ENCODE measurements at regions of chr7 and their contacts with region 1.

Region 1: DNA sequence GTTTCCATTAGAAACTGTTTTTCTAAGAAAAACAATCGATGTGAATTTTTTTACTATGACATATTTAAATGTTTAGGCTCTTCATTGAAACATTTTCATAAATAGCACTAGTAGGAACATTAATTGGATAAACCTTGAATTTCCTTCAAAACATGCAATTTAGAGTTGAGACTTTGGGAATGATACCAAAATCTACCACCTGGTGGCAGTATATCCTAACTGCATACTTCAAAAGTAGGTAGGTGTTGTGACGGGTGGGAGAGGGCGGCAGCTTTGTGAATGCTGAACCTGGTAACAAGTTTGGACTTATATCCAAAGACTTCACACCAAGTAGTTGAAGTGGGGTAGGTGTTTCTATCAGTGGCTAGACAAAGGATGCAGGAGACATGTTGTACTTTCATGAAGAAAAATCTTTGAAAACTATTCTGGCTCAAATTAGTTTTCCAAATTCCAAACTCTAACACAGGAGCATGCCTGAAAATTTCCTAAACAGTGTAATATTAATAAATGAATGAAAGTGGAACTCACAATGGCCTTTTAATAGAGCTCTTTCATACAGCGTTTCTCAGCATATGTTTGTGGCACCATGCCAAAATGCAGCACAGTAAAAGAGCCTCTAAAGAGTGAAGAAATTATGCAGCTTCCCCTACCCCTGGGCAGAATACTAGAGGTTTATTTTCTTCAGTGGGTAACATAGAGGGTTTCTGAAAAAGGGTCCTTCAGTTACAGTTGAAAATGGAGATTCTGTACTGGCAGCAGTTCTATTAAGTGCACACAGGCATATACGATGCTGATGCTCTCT is 201.0 kb upstream of the TPK1 start:
- DNase-seq: peak; percentile 12
- ATAC-seq: peak; percentile 86
- H3K4me3 ChIP-seq: no peak overlapping the region
- H3K27ac ChIP-seq: no peak overlapping the region
- H3K4me1 ChIP-seq: no peaks in the 10 kb centered on the region
- H3K27me3 ChIP-seq: no peaks in the 10 kb centered on the region
- CTCF ChIP-seq: peak; percentile 75 to 80 (median 77)
- EP300 ChIP-seq: no peak
- POLR2A ChIP-seq: no peak
- RAD21 ChIP-seq: peak; percentile 81

Region 2: DNA sequence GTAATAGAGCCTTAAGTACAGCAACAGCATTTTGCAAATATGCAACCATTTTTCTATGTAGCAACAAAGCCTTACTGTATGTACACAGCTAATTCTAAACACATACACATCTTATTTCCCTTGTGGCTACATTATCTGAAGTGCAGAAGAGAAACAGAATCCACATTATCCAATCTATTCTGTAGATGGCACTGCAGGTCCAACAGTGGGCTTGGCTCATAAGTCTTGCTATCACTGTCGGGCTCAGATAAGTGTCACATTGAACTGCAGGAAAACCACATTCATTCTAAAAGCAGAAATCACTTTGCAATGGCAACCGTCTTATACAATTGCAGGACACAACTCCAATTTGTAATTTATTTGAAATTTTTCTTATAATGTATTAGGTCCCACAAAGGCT is 523.5 kb before region 1 on chr7:
- CTCF ChIA-PET with region 1: no interaction called
- POLR2A ChIA-PET with region 1: no interaction called
- RAD21 ChIA-PET with region 1: no interaction called
- SMC1A ChIA-PET with region 1: no interaction called
- in situ Hi-C with region 1: no loop called
- intact Hi-C with region 1: loop called (anchors 10 kb)
- DNase-seq: peak; percentile 11
- ATAC-seq: peak; percentile 56
- H3K4me3 ChIP-seq: no peak overlapping the region
- H3K27ac ChIP-seq: no peak overlapping the region
- H3K4me1 ChIP-seq: peaks cover 4% of the 10 kb centered on the region
- H3K27me3 ChIP-seq: no peaks in the 10 kb centered on the region
- CTCF ChIP-seq: peak; percentile 15 to 54 (median 27); a peak in 4 of 6 replicates
- EP300 ChIP-seq: no peak
- POLR2A ChIP-seq: no peak
- RAD21 ChIP-seq: peak; percentile 67

Region 3: GRCh38 chr7:144738708-144739314 is 298.0 kb before region 1 on chr7:
- CTCF ChIA-PET with region 1: no interaction called
- POLR2A ChIA-PET with region 1: no interaction called
- RAD21 ChIA-PET with region 1: no interaction called
- SMC1A ChIA-PET with region 1: no interaction called
- in situ Hi-C with region 1: no loop called
- intact Hi-C with region 1: loop called (anchors 10 kb)
- DNase-seq: no peak
- ATAC-seq: peak; percentile 91
- H3K4me3 ChIP-seq: no peak overlapping the region
- H3K27ac ChIP-seq: no peak overlapping the region
- H3K4me1 ChIP-seq: no peaks in the 10 kb centered on the region
- H3K27me3 ChIP-seq: no peaks in the 10 kb centered on the region
- CTCF ChIP-seq: peak; percentile 66 to 71 (median 70)
- EP300 ChIP-seq: no peak
- POLR2A ChIP-seq: no peak
- RAD21 ChIP-seq: peak; percentile 66

Region 4: GRCh38 chr7:144780071-144780608 is 256.7 kb before region 1 on chr7:
- CTCF ChIA-PET with region 1: no interaction called
- POLR2A ChIA-PET with region 1: no interaction called
- RAD21 ChIA-PET with region 1: no interaction called
- SMC1A ChIA-PET with region 1: no interaction called
- in situ Hi-C with region 1: no loop called
- intact Hi-C with region 1: no loop called
- DNase-seq: no peak
- ATAC-seq: no peak
- H3K4me3 ChIP-seq: no peak overlapping the region
- H3K27ac ChIP-seq: no peak overlapping the region
- H3K4me1 ChIP-seq: no peaks in the 10 kb centered on the region
- H3K27me3 ChIP-seq: no peaks in the 10 kb centered on the region
- CTCF ChIP-seq: no peak
- EP300 ChIP-seq: no peak
- POLR2A ChIP-seq: no peak
- RAD21 ChIP-seq: no peak

Region 5: GRCh38 chr7:145082366-145083161 is 45.8 kb after region 1 on chr7:
- CTCF ChIA-PET with region 1: no interaction called
- POLR2A ChIA-PET with region 1: no interaction called
- RAD21 ChIA-PET with region 1: no interaction called
- SMC1A ChIA-PET with region 1: no interaction called
- in situ Hi-C with region 1: no loop called
- intact Hi-C with region 1: no loop called
- DNase-seq: no peak
- ATAC-seq: peak; percentile 69
- H3K4me3 ChIP-seq: no peak overlapping the region
- H3K27ac ChIP-seq: no peak overlapping the region
- H3K4me1 ChIP-seq: no peaks in the 10 kb centered on the region; the same call in 1 of the 2 replicates
- H3K27me3 ChIP-seq: no peaks in the 10 kb centered on the region
- CTCF ChIP-seq: no peak
- EP300 ChIP-seq: no peak
- POLR2A ChIP-seq: no peak
- RAD21 ChIP-seq: no peak

Region 6: DNA sequence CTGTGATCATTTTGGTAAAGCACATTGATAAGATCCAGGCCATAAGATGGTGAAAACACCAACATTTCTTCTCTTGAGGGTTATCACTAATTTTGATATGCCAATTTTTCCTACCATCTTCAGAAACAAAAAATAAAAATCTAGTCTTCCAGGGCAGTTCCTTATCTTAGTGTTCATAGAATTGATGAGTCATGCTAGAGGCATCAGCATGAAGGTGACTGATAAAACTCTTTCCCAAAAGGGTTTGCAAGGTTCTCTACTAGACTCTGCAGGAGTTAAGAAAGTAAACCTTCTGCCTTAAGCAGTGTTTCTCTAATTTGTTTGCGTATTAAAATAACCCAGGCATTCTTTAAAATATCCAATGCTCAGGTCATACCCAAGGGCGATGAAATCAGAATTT is 596.7 kb after region 1 on chr7:
- CTCF ChIA-PET with region 1: no interaction called
- POLR2A ChIA-PET with region 1: no interaction called
- RAD21 ChIA-PET with region 1: no interaction called
- SMC1A ChIA-PET with region 1: no interaction called
- in situ Hi-C with region 1: no loop called
- intact Hi-C with region 1: loop called (anchors 10 kb)
- DNase-seq: no peak
- ATAC-seq: no peak
- H3K4me3 ChIP-seq: no peak overlapping the region
- H3K27ac ChIP-seq: no peak overlapping the region
- H3K4me1 ChIP-seq: no peaks in the 10 kb centered on the region
- H3K27me3 ChIP-seq: no peaks in the 10 kb centered on the region
- CTCF ChIP-seq: no peak
- EP300 ChIP-seq: no peak
- POLR2A ChIP-seq: no peak
- RAD21 ChIP-seq: no peak

Region 7: GRCh38 chr7:145848691-145849090 is 811.9 kb after region 1 on chr7:
- CTCF ChIA-PET with region 1: no interaction called
- POLR2A ChIA-PET with region 1: no interaction called
- RAD21 ChIA-PET with region 1: no interaction called
- SMC1A ChIA-PET with region 1: no interaction called
- in situ Hi-C with region 1: no loop called
- intact Hi-C with region 1: loop called (anchors 5 kb)
- DNase-seq: no peak
- ATAC-seq: peak; percentile 59; the same call in 2 of the 3 replicates
- H3K4me3 ChIP-seq: no peak overlapping the region
- H3K27ac ChIP-seq: no peak overlapping the region
- H3K4me1 ChIP-seq: no peaks in the 10 kb centered on the region
- H3K27me3 ChIP-seq: no peaks in the 10 kb centered on the region
- CTCF ChIP-seq: peak in 2 of 3 experiments; percentile 23 to 25; a peak in 3 of 6 replicates
- EP300 ChIP-seq: no peak
- POLR2A ChIP-seq: no peak
- RAD21 ChIP-seq: no peak

Region 8: GRCh38 chr7:146090023-146090645 is 1053.3 kb after region 1 on chr7:
- CTCF ChIA-PET with region 1: interaction called, 30 read pairs
- POLR2A ChIA-PET with region 1: no interaction called
- RAD21 ChIA-PET with region 1: interaction called, 9 read pairs
- SMC1A ChIA-PET with region 1: interaction called, 14 read pairs
- in situ Hi-C with region 1: loop called (anchors 5 kb)
- intact Hi-C with region 1: loop called (anchors 1 kb)
- DNase-seq: no peak
- ATAC-seq: peak; percentile 84
- H3K4me3 ChIP-seq: no peak overlapping the region
- H3K27ac ChIP-seq: no peak overlapping the region
- H3K4me1 ChIP-seq: no peaks in the 10 kb centered on the region
- H3K27me3 ChIP-seq: no peaks in the 10 kb centered on the region
- CTCF ChIP-seq: peak; percentile 62 to 68 (median 67); a peak in 5 of 6 replicates
- EP300 ChIP-seq: no peak
- POLR2A ChIP-seq: no peak
- RAD21 ChIP-seq: peak; percentile 72

Measured in GM12878 (cell line).